ENCODE measurements at regions of chr11 and their contacts with region 1.

Region 1: DNA sequence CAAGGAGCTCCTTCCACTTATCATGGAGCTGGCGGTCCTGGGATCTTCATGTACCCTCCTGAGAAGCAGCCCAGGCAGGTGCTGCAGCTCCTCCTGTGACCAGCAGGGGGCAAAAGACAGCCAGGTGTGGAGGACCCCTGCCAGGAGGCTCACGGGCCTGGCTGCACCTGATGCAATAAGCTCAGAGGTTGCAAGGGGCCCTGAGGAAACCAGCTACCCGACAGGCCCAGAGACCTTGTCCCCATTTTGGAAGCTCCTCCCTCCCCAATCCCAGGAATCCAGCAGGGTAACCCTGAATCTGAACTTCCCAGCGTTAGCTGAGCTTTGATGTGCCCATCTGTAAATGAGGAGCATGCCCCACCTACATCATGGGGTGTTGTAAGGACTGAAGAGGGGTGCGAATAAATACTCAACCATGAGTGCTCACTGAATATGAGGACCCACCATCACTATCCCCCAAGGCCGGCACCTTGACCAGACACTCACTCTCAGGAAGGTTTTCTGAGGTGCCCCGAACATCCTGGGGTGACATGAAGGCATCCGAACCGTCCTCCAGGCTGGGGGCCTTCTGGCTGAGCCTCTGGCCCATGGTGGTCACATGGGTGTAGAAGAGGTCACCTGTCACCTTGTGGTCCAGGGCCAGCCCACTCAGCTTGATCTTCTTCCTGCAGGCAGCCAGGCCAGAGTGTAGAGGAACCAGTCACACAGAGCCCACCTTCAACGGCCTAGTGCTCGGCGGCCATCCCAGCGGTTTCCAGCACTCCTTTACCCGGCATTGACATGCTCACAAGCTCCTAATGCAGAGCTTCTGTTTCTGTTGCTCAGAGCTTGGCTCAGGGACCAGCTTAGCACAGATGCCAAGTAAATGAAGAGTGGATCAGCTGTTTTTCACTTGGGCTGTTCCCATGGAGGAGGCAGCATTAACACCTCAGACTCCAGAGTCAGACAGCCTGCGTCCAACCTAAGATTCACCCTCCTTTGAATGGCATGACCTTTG is 21.7 kb downstream of the SLC43A1 start:
- DNase-seq: no peak
- ATAC-seq: peak; percentile 94
- H3K4me3 ChIP-seq: no peak overlapping the region
- H3K27ac ChIP-seq: no peak overlapping the region
- H3K4me1 ChIP-seq: no peaks in the 10 kb centered on the region
- H3K27me3 ChIP-seq: no peaks in the 10 kb centered on the region
- CTCF ChIP-seq: peak; percentile 86 to 97 (median 91)
- EP300 ChIP-seq: no peak
- POLR2A ChIP-seq: no peak
- RAD21 ChIP-seq: peak; percentile 69

Region 2: GRCh38 chr11:57432714-57433163 is 61.1 kb before region 1 on chr11:
- CTCF ChIA-PET with region 1: interaction called, 10 read pairs
- POLR2A ChIA-PET with region 1: no interaction called
- RAD21 ChIA-PET with region 1: no interaction called
- SMC1A ChIA-PET with region 1: no interaction called
- in situ Hi-C with region 1: no loop called
- intact Hi-C with region 1: no loop called
- DNase-seq: no peak
- ATAC-seq: peak; percentile 74
- H3K4me3 ChIP-seq: no peak overlapping the region
- H3K27ac ChIP-seq: no peak overlapping the region
- H3K4me1 ChIP-seq: peaks cover 6% of the 10 kb centered on the region
- H3K27me3 ChIP-seq: no peaks in the 10 kb centered on the region
- CTCF ChIP-seq: no peak
- EP300 ChIP-seq: no peak
- POLR2A ChIP-seq: no peak
- RAD21 ChIP-seq: no peak

Region 3: GRCh38 chr11:57508341-57509170 is 14.8 kb after region 1 on chr11:
- CTCF ChIA-PET with region 1: interaction called, 158 read pairs
- POLR2A ChIA-PET with region 1: interaction called, 3 read pairs
- RAD21 ChIA-PET with region 1: interaction called, 46 read pairs
- SMC1A ChIA-PET with region 1: interaction called, 47 read pairs
- in situ Hi-C with region 1: no loop called
- intact Hi-C with region 1: no loop called
- DNase-seq: no peak
- ATAC-seq: no peak
- H3K4me3 ChIP-seq: no peak overlapping the region
- H3K27ac ChIP-seq: no peak overlapping the region
- H3K4me1 ChIP-seq: no peaks in the 10 kb centered on the region
- H3K27me3 ChIP-seq: no peaks in the 10 kb centered on the region
- CTCF ChIP-seq: no peak
- EP300 ChIP-seq: no peak
- POLR2A ChIP-seq: no peak
- RAD21 ChIP-seq: no peak

Region 4: DNA sequence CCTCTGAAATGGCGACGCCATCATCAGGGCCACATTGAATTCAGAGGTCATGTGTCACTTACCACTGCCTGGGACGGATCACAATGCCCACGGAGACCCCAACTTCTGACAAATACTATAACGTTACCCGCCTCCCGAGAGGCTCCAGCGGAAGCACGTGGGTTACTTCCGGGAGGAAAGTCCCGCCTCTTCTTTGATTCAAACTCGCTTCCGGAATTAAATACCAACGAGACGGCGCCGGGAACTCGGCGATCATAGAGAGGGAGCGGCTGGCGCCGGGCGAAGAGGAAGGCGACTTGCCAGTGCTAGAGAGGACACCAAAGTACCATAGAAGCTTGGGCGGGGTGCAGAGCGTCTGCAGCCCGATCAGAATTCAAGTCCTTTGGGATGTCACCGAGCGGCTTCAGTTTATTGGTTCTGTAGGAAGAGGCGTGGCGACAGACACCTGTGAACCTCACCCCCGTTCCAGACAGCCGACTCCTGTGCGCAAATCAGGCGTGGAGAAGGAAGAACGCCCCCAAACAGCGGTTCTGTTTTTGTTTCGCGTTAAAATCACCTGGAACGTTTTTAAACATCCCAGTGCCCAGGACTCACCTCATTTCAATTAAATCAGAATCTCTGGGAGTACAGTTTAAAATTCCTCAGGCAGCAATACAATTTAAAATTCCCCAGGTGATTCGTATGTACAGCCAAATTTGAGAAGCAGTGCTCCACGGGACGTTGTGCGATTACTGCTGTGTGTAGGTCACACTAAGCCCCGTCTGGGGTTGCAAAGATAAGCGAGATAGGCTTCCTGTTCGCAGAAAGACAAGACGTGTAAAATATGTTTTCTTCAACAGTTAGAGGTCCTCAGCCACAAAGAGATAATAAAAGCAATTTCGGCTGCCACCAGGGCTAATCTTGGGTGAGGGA is 37.0 kb after region 1 on chr11 and contains the start of gene TIMM10:
- CTCF ChIA-PET with region 1: interaction called, 396 read pairs
- POLR2A ChIA-PET with region 1: interaction called, 15 read pairs
- RAD21 ChIA-PET with region 1: interaction called, 133 read pairs
- SMC1A ChIA-PET with region 1: interaction called, 130 read pairs
- in situ Hi-C with region 1: loop called (anchors 5 kb)
- intact Hi-C with region 1: loop called (anchors 1 kb)
- DNase-seq: peak; percentile 95
- ATAC-seq: peak; percentile 97
- H3K4me3 ChIP-seq: peak within 1 kb of the TSS; percentile 85
- H3K27ac ChIP-seq: peak within 1 kb of the TSS; percentile 88
- H3K4me1 ChIP-seq: peaks cover 16% of the 10 kb centered on the region
- H3K27me3 ChIP-seq: no peaks in the 10 kb centered on the region
- CTCF ChIP-seq: no peak
- EP300 ChIP-seq: peak; percentile 21 to 35; a peak in 2 of 4 replicates
- POLR2A ChIP-seq: peak; percentile 79
- RAD21 ChIP-seq: no peak
- polyA plus RNA-seq, gene TIMM10: 770 to 898 TPM

Region 5: DNA sequence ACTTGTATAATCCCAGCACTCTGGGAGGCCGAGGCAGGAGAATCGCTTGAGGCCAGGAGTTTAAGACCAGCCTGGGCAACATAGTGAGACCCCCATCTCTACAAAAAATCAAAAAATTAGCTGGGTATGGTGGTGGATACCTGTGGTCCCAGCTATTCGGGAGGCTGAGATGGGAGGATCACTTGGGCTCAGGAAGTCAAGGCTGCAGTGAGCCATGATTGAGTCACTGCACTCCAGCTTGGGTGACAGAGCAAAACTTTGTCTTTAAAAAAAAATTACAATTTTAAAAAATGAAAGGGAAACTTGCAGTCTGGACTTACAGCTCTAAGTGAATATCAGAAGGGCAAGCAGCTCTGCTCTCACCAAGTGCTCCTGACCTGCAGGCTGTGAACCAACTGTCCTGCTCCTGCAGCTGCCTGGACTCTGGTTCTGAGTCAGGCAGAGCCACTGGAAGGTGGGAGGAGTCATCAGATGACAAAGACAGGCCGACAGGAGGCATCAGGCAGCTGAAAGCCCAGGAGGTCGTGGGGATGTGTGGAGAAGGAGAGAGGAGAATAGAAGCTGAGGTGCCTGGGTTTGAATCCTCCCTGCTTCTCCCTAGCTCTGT is 53.2 kb after region 1 on chr11:
- CTCF ChIA-PET with region 1: interaction called, 15 read pairs
- POLR2A ChIA-PET with region 1: no interaction called
- RAD21 ChIA-PET with region 1: no interaction called
- SMC1A ChIA-PET with region 1: interaction called, 6 read pairs
- in situ Hi-C with region 1: no loop called
- intact Hi-C with region 1: no loop called
- DNase-seq: no peak
- ATAC-seq: peak; percentile 82
- H3K4me3 ChIP-seq: no peak overlapping the region
- H3K27ac ChIP-seq: peak overlapping the region; percentile 48
- H3K4me1 ChIP-seq: peaks cover 15% of the 10 kb centered on the region
- H3K27me3 ChIP-seq: no peaks in the 10 kb centered on the region
- CTCF ChIP-seq: no peak
- EP300 ChIP-seq: 0 out of 4 replicates have a peak, but pooled peaks of 1 of the 2 experiments have one; percentile 15
- POLR2A ChIP-seq: no peak
- RAD21 ChIP-seq: no peak

Region 6: DNA sequence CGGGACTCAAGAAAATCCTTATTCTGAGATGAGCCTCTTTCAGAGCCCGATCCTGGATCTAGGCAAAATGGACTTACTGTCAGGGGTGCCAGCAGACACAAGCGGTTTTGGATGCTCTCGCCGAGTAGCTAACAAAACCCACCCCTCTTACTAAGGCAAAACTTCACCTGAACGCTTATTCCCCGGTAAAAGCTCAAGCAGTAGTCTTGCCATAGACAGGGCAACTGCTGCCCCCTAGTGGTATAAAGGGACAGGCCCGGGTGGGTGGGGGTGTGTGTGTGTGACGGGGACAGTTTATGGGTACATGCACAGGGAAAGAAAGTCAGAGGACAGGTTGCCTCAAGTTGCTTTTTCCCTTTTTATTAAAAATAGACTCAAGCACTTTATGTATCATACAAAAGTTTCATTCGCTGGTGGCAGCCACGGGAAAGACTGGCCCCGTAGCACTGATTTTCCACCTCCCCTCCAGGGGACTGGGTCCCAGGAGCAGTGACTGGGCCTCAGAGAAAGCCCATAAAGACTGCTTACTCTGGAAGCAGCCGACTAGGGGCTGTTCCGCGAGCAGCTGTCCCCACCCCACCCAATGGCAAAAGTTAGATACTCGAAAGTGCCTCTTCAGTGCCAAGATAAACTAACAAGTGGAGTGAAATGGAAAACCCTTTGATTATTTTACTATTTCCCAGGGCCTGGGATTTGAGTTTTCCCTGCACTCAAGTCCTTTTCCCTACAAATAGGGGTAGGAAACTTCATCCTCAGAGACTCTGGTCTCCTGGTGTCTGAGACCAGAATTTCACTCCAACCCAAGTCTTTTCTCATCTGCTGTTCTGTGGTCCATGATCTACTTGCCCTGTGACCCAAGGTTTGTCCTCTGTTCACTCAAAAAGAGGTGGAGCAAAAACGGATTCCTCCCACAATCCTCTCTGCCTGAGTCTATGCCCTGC is 151.2 kb after region 1 on chr11:
- CTCF ChIA-PET with region 1: interaction called, 157 read pairs
- POLR2A ChIA-PET with region 1: no interaction called
- RAD21 ChIA-PET with region 1: interaction called, 34 read pairs
- SMC1A ChIA-PET with region 1: interaction called, 25 read pairs
- in situ Hi-C with region 1: loop called (anchors 5 kb)
- intact Hi-C with region 1: loop called (anchors 2 kb)
- DNase-seq: no peak
- ATAC-seq: peak; percentile 85
- H3K4me3 ChIP-seq: no peak overlapping the region
- H3K27ac ChIP-seq: no peak overlapping the region
- H3K4me1 ChIP-seq: peaks cover 12% of the 10 kb centered on the region
- H3K27me3 ChIP-seq: peaks cover 10 to 17% of the 10 kb centered on the region in 2 experiments
- CTCF ChIP-seq: peak; percentile 73 to 85 (median 85)
- EP300 ChIP-seq: no peak
- POLR2A ChIP-seq: no peak
- RAD21 ChIP-seq: peak; percentile 93

Region 7: GRCh38 chr11:58254936-58255335 is 761.1 kb after region 1 on chr11:
- CTCF ChIA-PET with region 1: no interaction called
- POLR2A ChIA-PET with region 1: no interaction called
- RAD21 ChIA-PET with region 1: no interaction called
- SMC1A ChIA-PET with region 1: no interaction called
- in situ Hi-C with region 1: no loop called
- intact Hi-C with region 1: no loop called
- DNase-seq: no peak
- ATAC-seq: no peak
- H3K4me3 ChIP-seq: no peak overlapping the region
- H3K27ac ChIP-seq: no peak overlapping the region
- H3K4me1 ChIP-seq: no peaks in the 10 kb centered on the region
- H3K27me3 ChIP-seq: no peaks in the 10 kb centered on the region
- CTCF ChIP-seq: no peak
- EP300 ChIP-seq: no peak
- POLR2A ChIP-seq: no peak
- RAD21 ChIP-seq: no peak

Measured in GM12878 (cell line).